HCT116 (cell line): ENCODE measurements at regions of chr7 and their contacts with region 1.

Region 1: GRCh38 chr7:75914730-75915585 is at the start of gene POR:
- DNase-seq: peak; percentile 83
- ATAC-seq: peak; percentile 89
- H3K4me3 ChIP-seq: peak within 1 kb of the TSS; percentile 94 to 98
- H3K27ac ChIP-seq: peak within 1 kb of the TSS; percentile 79
- H3K4me1 ChIP-seq: peaks cover 13 to 33% of the 10 kb centered on the region in 2 experiments; a peak in 3 of 4 replicates
- H3K27me3 ChIP-seq: no peaks in the 10 kb centered on the region
- CTCF ChIP-seq: no peak
- POLR2A ChIP-seq: peak; percentile 99
- RAD21 ChIP-seq: peak; percentile 37; the same call in 1 of the 2 replicates
- total RNA-seq, gene POR: 120 TPM

Region 2: GRCh38 chr7:75795831-75796285 is 119.1 kb before region 1 on chr7:
- CTCF ChIA-PET with region 1: no interaction called
- POLR2A ChIA-PET with region 1: no interaction called
- RAD21 ChIA-PET with region 1: no interaction called
- intact Hi-C with region 1: no loop called
- DNase-seq: no peak
- ATAC-seq: no peak
- H3K4me3 ChIP-seq: no peak overlapping the region
- H3K27ac ChIP-seq: no peak overlapping the region
- H3K4me1 ChIP-seq: peaks cover 5 to 13% of the 10 kb centered on the region in 2 experiments
- H3K27me3 ChIP-seq: no peaks in the 10 kb centered on the region
- CTCF ChIP-seq: no peak
- POLR2A ChIP-seq: no peak
- RAD21 ChIP-seq: no peak

Region 3: DNA sequence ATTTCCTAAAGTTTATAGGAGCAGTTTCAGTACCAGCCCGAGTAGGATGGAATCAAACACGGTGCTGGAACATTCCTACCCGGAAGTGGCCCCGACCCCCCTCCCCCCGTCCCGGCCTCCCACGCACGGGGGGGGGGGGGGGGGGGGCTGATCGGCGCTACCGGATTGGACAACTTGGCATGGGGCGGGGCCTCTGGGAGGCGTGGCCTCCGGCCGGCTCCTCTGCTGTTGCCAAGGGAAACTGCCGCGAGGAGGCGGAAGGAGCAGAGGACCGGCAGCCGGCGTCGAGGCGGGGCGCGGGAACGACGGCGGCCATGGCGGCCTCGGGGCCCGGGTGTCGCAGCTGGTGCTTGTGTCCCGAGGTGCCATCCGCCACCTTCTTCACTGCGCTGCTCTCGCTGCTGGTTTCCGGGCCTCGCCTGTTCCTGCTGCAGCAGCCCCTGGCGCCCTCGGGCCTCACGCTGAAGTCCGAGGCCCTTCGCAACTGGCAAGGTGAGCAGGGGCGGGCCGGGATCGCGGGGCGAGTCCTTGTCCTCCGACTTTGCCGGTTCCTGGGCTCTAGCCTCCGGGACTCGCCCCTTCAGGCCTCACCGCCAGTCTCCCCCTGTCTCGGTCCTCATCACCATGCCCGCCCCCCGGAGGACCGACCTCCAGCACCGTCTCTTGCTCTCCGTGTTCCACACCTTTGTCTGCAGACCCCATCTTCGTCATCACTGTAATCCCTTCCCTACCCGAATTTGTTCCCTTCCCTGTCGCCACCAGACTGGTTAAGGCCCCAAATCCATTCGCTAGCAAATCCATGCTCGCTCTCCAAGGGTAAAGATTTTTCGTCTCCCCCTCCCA is 36.0 kb before region 1 on chr7 and contains the start of gene RHBDD2:
- CTCF ChIA-PET with region 1: no interaction called
- POLR2A ChIA-PET with region 1: no interaction called
- RAD21 ChIA-PET with region 1: no interaction called
- intact Hi-C with region 1: loop called (anchors 2 kb)
- DNase-seq: peak; percentile 79
- ATAC-seq: peak; percentile 96
- H3K4me3 ChIP-seq: peak within 1 kb of the TSS; percentile 94 to 98
- H3K27ac ChIP-seq: peak within 1 kb of the TSS; percentile 61
- H3K4me1 ChIP-seq: peaks cover 12 to 16% of the 10 kb centered on the region in 2 experiments
- H3K27me3 ChIP-seq: no peaks in the 10 kb centered on the region
- CTCF ChIP-seq: no peak
- POLR2A ChIP-seq: peak; percentile 59
- RAD21 ChIP-seq: no peak
- total RNA-seq, gene RHBDD2: 42.9 TPM

Region 4: DNA sequence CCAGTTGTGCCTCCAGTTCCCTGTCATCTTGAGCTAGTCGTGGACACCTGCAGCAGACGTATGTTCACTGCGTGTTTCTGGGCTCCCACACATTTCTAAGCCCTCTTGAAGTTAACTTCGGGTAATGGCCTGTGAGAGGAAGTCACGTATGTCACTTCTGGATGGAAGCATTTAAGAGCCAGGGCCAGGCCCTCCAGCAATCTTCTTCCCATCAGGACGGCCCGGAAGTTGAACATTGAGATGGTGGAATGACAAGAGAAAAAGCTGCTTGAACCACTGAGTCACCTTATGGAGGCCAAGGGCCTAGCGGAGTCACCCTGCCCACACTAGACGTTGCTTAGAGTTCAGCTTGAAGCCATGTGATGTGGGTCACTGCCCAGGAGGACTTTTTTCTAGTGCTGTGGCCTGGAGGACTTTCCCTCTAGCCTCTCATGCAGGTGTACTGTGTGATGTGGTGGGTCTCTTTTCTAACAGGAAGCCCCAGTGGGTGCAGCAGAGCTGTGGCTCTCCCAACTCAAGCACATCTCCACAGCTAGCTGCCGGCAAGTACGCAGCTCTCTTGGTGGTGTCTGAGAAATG is 13.5 kb after region 1 on chr7:
- CTCF ChIA-PET with region 1: no interaction called
- POLR2A ChIA-PET with region 1: interaction called, 21 read pairs
- RAD21 ChIA-PET with region 1: no interaction called
- intact Hi-C with region 1: no loop called
- DNase-seq: no peak
- ATAC-seq: no peak
- H3K4me3 ChIP-seq: no peak overlapping the region
- H3K27ac ChIP-seq: no peak overlapping the region
- H3K4me1 ChIP-seq: peaks cover 19 to 20% of the 10 kb centered on the region in 2 experiments
- H3K27me3 ChIP-seq: no peaks in the 10 kb centered on the region
- CTCF ChIP-seq: no peak
- POLR2A ChIP-seq: no peak
- RAD21 ChIP-seq: no peak

Region 5: DNA sequence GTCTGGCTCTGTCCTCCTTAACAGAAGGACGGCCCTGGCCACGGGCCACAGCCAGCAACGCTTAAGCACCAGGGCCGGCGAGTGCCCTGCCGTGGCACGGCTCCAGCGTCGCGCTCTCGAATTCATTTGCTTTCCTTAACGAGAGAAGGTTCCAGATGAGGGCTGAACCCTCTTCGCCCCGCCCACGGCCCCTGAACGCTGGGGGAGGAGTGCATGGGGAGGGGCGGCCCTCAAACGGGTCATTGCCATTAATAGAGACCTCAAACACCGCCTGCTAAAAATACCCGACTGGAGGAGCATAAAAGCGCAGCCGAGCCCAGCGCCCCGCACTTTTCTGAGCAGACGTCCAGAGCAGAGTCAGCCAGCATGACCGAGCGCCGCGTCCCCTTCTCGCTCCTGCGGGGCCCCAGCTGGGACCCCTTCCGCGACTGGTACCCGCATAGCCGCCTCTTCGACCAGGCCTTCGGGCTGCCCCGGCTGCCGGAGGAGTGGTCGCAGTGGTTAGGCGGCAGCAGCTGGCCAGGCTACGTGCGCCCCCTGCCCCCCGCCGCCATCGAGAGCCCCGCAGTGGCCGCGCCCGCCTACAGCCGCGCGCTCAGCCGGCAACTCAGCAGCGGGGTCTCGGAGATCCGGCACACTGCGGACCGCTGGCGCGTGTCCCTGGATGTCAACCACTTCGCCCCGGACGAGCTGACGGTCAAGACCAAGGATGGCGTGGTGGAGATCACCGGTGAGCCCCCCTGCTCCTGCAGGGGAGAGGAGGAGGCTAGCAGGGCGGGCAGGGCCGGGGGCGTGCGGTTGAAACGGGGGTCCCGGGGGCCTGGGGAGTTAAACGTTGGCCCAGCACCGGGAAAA is 387.6 kb after region 1 on chr7 and contains the start of gene HSPB1:
- CTCF ChIA-PET with region 1: no interaction called
- POLR2A ChIA-PET with region 1: no interaction called
- RAD21 ChIA-PET with region 1: no interaction called
- intact Hi-C with region 1: no loop called
- DNase-seq: peak; percentile 79
- ATAC-seq: peak; percentile 67
- H3K4me3 ChIP-seq: peak within 1 kb of the TSS; percentile 86 to 94
- H3K27ac ChIP-seq: peak within 1 kb of the TSS; percentile 95
- H3K4me1 ChIP-seq: peaks cover 45 to 75% of the 10 kb centered on the region in 2 experiments
- H3K27me3 ChIP-seq: no peaks in the 10 kb centered on the region
- CTCF ChIP-seq: no peak
- POLR2A ChIP-seq: peak; percentile 86
- RAD21 ChIP-seq: no peak
- total RNA-seq, gene HSPB1: 524 TPM